ENCODE measurements at regions of chr17 and their contacts with region 1.

Region 1: GRCh38 chr17:1516388-1517161 is at the start of gene INPP5K:
- DNase-seq: peak; percentile 98
- H3K4me3 ChIP-seq: peak within 1 kb of the TSS; percentile 95 to 98 (median 96)
- H3K27ac ChIP-seq: peak within 1 kb of the TSS; percentile 71
- H3K4me1 ChIP-seq: peaks cover 27% of the 10 kb centered on the region
- H3K27me3 ChIP-seq: no peaks in the 10 kb centered on the region
- CTCF ChIP-seq: peak in 1 of 2 donors; percentile 17
- total RNA-seq, gene INPP5K: 18.9 to 30.5 TPM

Region 2: GRCh38 chr17:1260086-1260769 is 256.3 kb before region 1 on chr17:
- CTCF ChIA-PET with region 1: interaction called, 4 read pairs
- dilution Hi-C with region 1: no loop called
- in situ Hi-C with region 1: loop called in 1 of 2 experiments (anchors 25 kb)
- intact Hi-C with region 1: loop called (anchors 1 kb)
- DNase-seq: no peak
- H3K4me3 ChIP-seq: peak overlapping the region in 2 of 3 experiments; percentile 24 to 65
- H3K27ac ChIP-seq: no peak overlapping the region
- H3K4me1 ChIP-seq: peaks cover 4% of the 10 kb centered on the region
- H3K27me3 ChIP-seq: peaks cover 3% of the 10 kb centered on the region
- CTCF ChIP-seq: no peak

Region 3: DNA sequence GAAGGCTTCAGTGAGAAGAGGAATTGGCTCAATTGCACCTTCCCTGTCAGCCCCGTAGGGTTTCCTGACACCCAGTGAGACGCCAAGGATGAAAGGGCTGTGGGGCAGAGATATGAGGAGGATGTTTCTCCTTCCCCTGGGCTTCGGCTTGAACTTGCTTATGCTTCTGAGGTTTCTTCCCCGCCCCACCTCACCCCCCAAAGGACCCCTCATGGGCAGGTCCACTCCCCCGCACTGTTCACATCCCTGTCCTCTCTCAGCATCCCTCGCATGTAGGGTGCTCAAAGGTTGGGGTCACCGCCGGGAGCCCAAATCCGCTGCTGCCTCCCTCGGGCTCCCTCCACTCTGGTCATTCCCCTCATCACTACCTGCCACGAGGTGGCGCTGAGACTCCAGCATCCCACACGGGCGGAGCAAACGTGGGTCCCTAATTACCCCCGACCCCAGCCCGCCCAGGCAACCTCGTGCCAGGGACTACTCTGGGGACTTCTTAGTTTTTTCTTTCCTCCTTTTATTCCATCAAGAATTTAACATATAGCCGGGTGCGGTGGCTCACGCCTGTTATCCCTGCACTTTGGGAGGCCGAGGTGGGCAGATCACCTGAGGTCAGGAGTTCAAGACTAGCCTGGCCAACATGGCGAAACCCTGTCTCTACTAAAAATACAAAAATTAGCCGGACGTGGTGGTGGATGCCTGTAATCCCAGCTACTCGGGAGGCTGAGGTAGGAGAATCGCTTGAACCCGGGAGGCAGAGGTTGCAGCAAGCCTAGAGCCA is 240.4 kb before region 1 on chr17:
- CTCF ChIA-PET with region 1: no interaction called
- dilution Hi-C with region 1: no loop called
- in situ Hi-C with region 1: loop called in 1 of 2 experiments (anchors 25 kb)
- intact Hi-C with region 1: loop called (anchors 1 kb)
- DNase-seq: no peak
- H3K4me3 ChIP-seq: no peak overlapping the region
- H3K27ac ChIP-seq: no peak overlapping the region
- H3K4me1 ChIP-seq: no peaks in the 10 kb centered on the region
- H3K27me3 ChIP-seq: peaks cover 10% of the 10 kb centered on the region
- CTCF ChIP-seq: peak; percentile 57 to 88

Region 4: GRCh38 chr17:1365445-1366039 is 151.0 kb before region 1 on chr17:
- CTCF ChIA-PET with region 1: interaction called, 30 read pairs
- dilution Hi-C with region 1: no loop called
- in situ Hi-C with region 1: loop called in 1 of 2 experiments (anchors 5 kb)
- intact Hi-C with region 1: loop called (anchors 1 kb)
- DNase-seq: peak; percentile 67
- H3K4me3 ChIP-seq: no peak overlapping the region
- H3K27ac ChIP-seq: no peak overlapping the region
- H3K4me1 ChIP-seq: peaks cover 21% of the 10 kb centered on the region
- H3K27me3 ChIP-seq: no peaks in the 10 kb centered on the region
- CTCF ChIP-seq: peak; percentile 88 to 93

Region 5: DNA sequence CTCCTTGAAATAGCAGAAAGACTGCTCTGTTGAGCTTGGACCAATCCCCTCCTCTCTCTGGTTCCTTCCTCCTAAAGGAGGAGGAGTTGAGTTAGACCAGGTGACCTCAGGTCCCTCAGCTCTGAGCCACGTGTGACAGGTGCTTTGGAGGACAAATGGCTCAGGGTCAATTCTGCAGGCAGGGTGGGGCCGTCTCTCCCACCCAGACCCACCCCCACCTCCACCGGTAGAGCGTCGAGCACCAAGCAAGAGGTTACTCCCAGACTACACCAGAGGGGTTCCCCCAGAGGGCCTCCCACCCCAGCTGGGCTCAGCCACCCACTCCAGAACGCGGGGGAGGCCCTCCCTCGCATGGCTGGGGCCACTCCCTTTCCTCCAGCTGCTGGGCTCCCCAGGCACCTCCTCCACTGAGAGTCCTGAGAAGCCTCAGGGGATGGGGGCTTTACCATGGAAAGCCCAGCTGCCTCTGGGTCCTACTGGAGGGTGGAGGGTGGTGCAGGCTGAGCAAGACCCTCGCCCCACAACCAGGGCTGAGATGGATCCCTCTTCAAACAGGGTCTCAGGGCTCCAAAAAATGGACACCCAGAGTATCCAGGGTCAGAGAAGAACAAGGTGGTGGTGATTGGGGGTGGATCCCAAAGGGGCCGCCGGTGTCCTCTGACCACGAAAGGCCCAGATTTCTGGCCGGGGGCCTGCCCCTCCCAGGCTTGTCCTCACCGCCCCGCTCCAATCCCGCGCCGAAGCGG is 31.7 kb before region 1 on chr17:
- CTCF ChIA-PET with region 1: no interaction called
- dilution Hi-C with region 1: no loop called
- in situ Hi-C with region 1: no loop called
- intact Hi-C with region 1: loop called (anchors 1 kb)
- DNase-seq: peak; percentile 32
- H3K4me3 ChIP-seq: peak overlapping the region; percentile 59 to 91 (median 69)
- H3K27ac ChIP-seq: peak overlapping the region; percentile 48
- H3K4me1 ChIP-seq: peaks cover 33% of the 10 kb centered on the region
- H3K27me3 ChIP-seq: no peaks in the 10 kb centered on the region
- CTCF ChIP-seq: no peak

Measured in mammary epithelial cell (primary cell).